Spleen (tissue), 13 donors: ENCODE measurements at regions of chr10 and their contacts with region 1.

Region 1: DNA sequence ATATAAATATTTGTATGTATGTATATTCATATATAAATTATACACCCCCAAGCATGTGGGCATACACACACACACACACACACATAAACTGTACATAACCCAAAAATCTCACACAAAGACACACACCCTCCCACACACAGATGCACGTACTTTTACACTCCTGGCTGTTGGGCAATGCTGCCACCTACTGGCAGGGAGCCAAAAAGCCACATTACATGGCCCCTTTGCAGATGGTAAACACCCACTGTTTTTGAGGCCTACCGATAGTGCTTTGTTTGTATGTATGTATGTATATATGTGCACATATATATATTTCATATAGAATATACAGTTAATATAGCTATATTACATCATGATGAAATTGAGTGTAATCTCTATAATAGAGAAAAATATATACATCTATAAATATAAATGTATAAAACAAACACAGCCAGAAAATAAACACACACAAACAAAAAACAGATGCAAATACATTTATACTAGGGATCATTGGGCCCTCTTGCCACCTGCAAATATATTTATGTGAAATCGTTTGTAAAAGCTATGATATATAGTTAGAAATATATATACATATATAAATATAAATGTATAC is 120.1 kb upstream of the ACBD5 start:
- DNase-seq: peak; percentile 91
- H3K4me3 ChIP-seq: no peak overlapping the region
- H3K27ac ChIP-seq: no peak overlapping the region
- H3K4me1 ChIP-seq: peaks cover 0 to 5% (median 0%) of the 10 kb centered on the region in 6 donors
- H3K27me3 ChIP-seq: no peaks in the 10 kb centered on the region
- CTCF ChIP-seq: peak; percentile 80 to 91 (median 89)
- POLR2A ChIP-seq: no peak

Region 2: GRCh38 chr10:26890956-26891355 is 469.7 kb before region 1 on chr10:
- intact Hi-C with region 1: loop called (anchors 10 kb)
- DNase-seq: no peak
- H3K4me3 ChIP-seq: no peak overlapping the region
- H3K27ac ChIP-seq: no peak overlapping the region
- H3K4me1 ChIP-seq: no peaks in the 10 kb centered on the region
- H3K27me3 ChIP-seq: no peaks in the 10 kb centered on the region
- CTCF ChIP-seq: peak in 9 of 11 experiments; percentile 17 to 56 (median 43)
- POLR2A ChIP-seq: no peak

Region 3: DNA sequence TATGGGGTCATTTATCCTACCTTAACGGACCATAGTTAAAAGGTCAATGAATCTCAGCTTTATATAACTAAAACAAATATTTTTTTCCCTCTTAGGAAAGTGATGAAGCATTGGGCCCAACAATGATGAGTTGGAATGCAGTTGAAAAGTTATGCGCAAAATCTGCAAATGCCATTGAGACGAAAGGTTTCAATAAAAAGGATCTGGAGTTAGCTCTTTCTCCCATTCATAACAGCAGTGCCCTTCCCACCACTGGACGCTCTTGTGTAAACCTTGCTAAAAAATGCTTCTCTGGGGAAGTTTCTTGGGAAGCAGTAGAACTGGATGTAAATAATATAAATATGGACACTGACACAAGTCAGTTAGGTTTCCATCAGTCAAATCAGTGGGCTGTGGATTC is 190.8 kb before region 1 on chr10:
- intact Hi-C with region 1: no loop called
- DNase-seq: no peak
- H3K4me3 ChIP-seq: no peak overlapping the region
- H3K27ac ChIP-seq: no peak overlapping the region
- H3K4me1 ChIP-seq: no peaks in the 10 kb centered on the region
- H3K27me3 ChIP-seq: no peaks in the 10 kb centered on the region
- CTCF ChIP-seq: no peak
- POLR2A ChIP-seq: no peak

Region 4: DNA sequence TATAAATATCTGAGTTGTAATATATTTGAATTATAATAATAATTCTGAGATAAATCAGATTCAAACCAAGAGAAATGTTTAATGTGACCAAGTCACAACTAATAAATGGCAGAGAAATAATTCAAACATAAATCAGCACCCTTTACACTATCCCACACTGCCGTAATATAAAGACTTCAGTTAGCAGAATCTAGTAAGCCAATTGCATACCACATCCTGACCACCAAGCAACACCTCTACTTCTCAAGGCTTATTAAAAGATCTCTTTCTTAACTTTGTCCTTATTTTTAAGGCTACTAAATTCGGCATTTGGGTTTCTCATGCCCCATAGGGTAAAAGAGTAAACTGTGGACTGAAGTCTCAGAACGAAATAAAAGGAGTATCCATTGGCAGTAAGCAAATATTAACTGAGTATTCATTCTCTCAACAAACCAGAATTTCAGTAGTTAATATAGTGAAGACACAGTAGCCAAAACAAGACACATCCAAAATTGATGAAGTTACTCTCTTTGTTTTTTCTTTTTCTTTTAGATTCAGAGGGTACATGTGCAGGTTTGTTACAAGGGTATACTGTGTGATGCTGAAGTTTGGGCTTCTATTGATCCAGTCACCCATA is 134.9 kb before region 1 on chr10:
- intact Hi-C with region 1: loop called (anchors 5 kb)
- DNase-seq: no peak
- H3K4me3 ChIP-seq: no peak overlapping the region
- H3K27ac ChIP-seq: peak overlapping the region in 2 of 8 donors; percentile 31 to 34
- H3K4me1 ChIP-seq: peaks cover 0 to 35% (median 0%) of the 10 kb centered on the region in 6 donors
- H3K27me3 ChIP-seq: no peaks in the 10 kb centered on the region
- CTCF ChIP-seq: no peak
- POLR2A ChIP-seq: no peak

Region 5: GRCh38 chr10:27297839-27298521 is 62.7 kb before region 1 on chr10:
- intact Hi-C with region 1: no loop called
- DNase-seq: no peak
- H3K4me3 ChIP-seq: no peak overlapping the region
- H3K27ac ChIP-seq: peak overlapping the region in 1 of 8 donors; percentile 28
- H3K4me1 ChIP-seq: peaks cover 0 to 5% (median 0%) of the 10 kb centered on the region in 6 donors
- H3K27me3 ChIP-seq: no peaks in the 10 kb centered on the region
- CTCF ChIP-seq: no peak
- POLR2A ChIP-seq: no peak

Region 6: GRCh38 chr10:28503114-28503513 is 1142.4 kb after region 1 on chr10:
- intact Hi-C with region 1: no loop called
- DNase-seq: no peak
- H3K4me3 ChIP-seq: no peak overlapping the region
- H3K27ac ChIP-seq: no peak overlapping the region
- H3K4me1 ChIP-seq: peaks cover 0 to 5% (median 0%) of the 10 kb centered on the region in 6 donors
- H3K27me3 ChIP-seq: no peaks in the 10 kb centered on the region
- CTCF ChIP-seq: no peak
- POLR2A ChIP-seq: no peak